ENCODE measurements at regions of chr1 and their contacts with region 1.

Region 1: GRCh38 chr1:32013386-32014198 is at the start of gene KHDRBS1:
- DNase-seq: peak; percentile 100
- H3K4me3 ChIP-seq: peak within 1 kb of the TSS; percentile 82 to 100 (median 93)
- H3K27ac ChIP-seq: peak within 1 kb of the TSS; percentile 99 to 100 (median 100)
- H3K4me1 ChIP-seq: peaks cover 25 to 47% (median 44%) of the 10 kb centered on the region in 4 donors
- H3K27me3 ChIP-seq: no peaks in the 10 kb centered on the region
- CTCF ChIP-seq: peak in 1 of 3 experiments; percentile 22
- EP300 ChIP-seq: no peak
- POLR2A ChIP-seq: peak; percentile 94
- total RNA-seq, gene KHDRBS1: 71.8 to 90.5 (median 79.7) TPM

Region 2: DNA sequence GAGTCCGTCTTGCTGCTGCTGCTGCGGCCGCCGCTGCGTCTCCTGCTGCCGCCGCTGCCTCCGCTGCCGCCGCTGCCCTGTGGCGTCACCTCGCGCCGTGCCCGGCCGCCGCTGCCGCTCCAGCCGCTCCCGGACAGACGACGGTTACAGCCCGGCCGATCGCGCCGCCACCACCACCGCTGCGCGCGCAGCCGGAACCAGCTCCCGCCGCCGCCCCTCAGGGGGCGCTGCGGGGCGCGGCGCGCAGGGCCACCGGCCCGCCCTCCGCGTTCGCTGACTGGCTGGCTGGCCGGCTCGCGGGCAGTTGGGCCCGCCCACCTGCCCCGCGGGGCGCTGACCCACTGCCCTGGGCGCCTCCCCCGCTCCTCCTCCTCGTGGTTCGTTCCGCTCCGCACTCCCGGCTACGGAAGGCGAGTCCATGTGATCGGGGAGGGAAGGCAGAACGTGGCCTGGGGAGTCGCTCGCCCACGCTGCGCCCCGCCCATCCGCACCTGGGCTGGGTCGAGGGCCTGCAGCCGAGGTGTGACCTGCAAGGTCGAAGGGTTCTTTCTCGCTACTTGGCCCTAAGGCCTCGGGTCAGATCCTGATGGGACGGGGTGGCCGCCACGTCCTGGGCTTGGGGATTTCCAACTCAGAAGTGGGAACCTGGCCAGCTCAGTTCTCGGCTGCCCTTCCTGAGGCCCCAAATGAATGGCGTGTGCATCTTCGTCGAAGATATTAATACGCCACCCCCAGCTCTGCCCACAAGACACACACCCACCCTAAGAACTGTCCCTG is 75.2 kb before region 1 on chr1 and contains the start of gene PTP4A2:
- intact Hi-C with region 1: loop called (anchors 10 kb)
- DNase-seq: peak; percentile 97
- H3K4me3 ChIP-seq: peak within 1 kb of the TSS; percentile 80 to 88 (median 84)
- H3K27ac ChIP-seq: peak within 1 kb of the TSS; percentile 94 to 97 (median 96)
- H3K4me1 ChIP-seq: peaks cover 52 to 73% (median 61%) of the 10 kb centered on the region in 4 donors
- H3K27me3 ChIP-seq: no peaks in the 10 kb centered on the region
- CTCF ChIP-seq: peak; percentile 31 to 79 (median 66)
- EP300 ChIP-seq: no peak
- POLR2A ChIP-seq: peak; percentile 67
- total RNA-seq, gene PTP4A2: 160 to 241 (median 173) TPM

Measured in esophagus muscularis mucosa (tissue), 4 donors.